H1 (cell line): ENCODE measurements at regions of chr1 and their contacts with region 1.

Region 1: GRCh38 chr1:156689035-156689952 is 12.1 kb upstream of the NES start:
- DNase-seq: peak in 1 of 2 experiments; percentile 92
- H3K4me3 ChIP-seq: peak overlapping the region in 3 of 4 experiments; percentile 36 to 55 (median 52); a peak in 6 of 8 replicates
- H3K27ac ChIP-seq: no peak overlapping the region
- H3K4me1 ChIP-seq: peaks cover 20 to 47% (median 36%) of the 10 kb centered on the region in 4 experiments
- H3K27me3 ChIP-seq: peaks cover 0 to 7% (median 0%) of the 10 kb centered on the region in 4 experiments; a peak in 2 of 7 replicates
- CTCF ChIP-seq: peak; percentile 91 to 98 (median 97)
- EP300 ChIP-seq: no peak; a peak in 1 of 3 replicates
- POLR2A ChIP-seq: no peak
- RAD21 ChIP-seq: peak; percentile 99 to 100

Region 2: GRCh38 chr1:156510709-156511108 is 178.6 kb before region 1 on chr1:
- CTCF ChIA-PET with region 1: no interaction called
- POLR2A ChIA-PET with region 1: no interaction called
- DNase-seq: no peak
- H3K4me3 ChIP-seq: no peak overlapping the region
- H3K27ac ChIP-seq: no peak overlapping the region
- H3K4me1 ChIP-seq: peaks cover 0 to 11% (median 4%) of the 10 kb centered on the region in 4 experiments; a peak in 3 of 7 replicates
- H3K27me3 ChIP-seq: no peaks in the 10 kb centered on the region
- CTCF ChIP-seq: no peak
- EP300 ChIP-seq: no peak
- POLR2A ChIP-seq: no peak
- RAD21 ChIP-seq: no peak

Region 3: GRCh38 chr1:156705918-156706656 is 16.8 kb after region 1 on chr1:
- CTCF ChIA-PET with region 1: interaction called, 4,284 read pairs
- POLR2A ChIA-PET with region 1: interaction called, 530 read pairs
- DNase-seq: peak; percentile 86 to 98
- H3K4me3 ChIP-seq: peak overlapping the region; percentile 50 to 80 (median 70)
- H3K27ac ChIP-seq: peak overlapping the region; percentile 79
- H3K4me1 ChIP-seq: peaks cover 27 to 57% (median 45%) of the 10 kb centered on the region in 4 experiments
- H3K27me3 ChIP-seq: peaks cover 0 to 19% (median 8%) of the 10 kb centered on the region in 4 experiments; a peak in 4 of 7 replicates
- CTCF ChIP-seq: peak; percentile 72 to 86 (median 81)
- EP300 ChIP-seq: peak in 1 of 2 experiments; percentile 51; a peak in 1 of 3 replicates
- POLR2A ChIP-seq: no peak
- RAD21 ChIP-seq: peak; percentile 78 to 88

Region 4: GRCh38 chr1:156751758-156752757 is 62.8 kb after region 1 on chr1:
- CTCF ChIA-PET with region 1: interaction called, 24 read pairs
- POLR2A ChIA-PET with region 1: interaction called, 22 read pairs
- DNase-seq: peak; percentile 91 to 93
- H3K4me3 ChIP-seq: peak overlapping the region; percentile 86 to 100 (median 95)
- H3K27ac ChIP-seq: peak overlapping the region; percentile 85
- H3K4me1 ChIP-seq: peaks cover 24 to 36% (median 27%) of the 10 kb centered on the region in 4 experiments
- H3K27me3 ChIP-seq: no peaks in the 10 kb centered on the region
- CTCF ChIP-seq: no peak; a peak in 1 of 4 replicates
- EP300 ChIP-seq: peak in 1 of 2 experiments; percentile 84; a peak in 1 of 3 replicates
- POLR2A ChIP-seq: peak; percentile 65 to 79; a peak in 2 of 3 replicates
- RAD21 ChIP-seq: no peak

Region 5: GRCh38 chr1:156789621-156790318 is 100.5 kb after region 1 on chr1:
- CTCF ChIA-PET with region 1: interaction called, 12 read pairs
- POLR2A ChIA-PET with region 1: no interaction called
- DNase-seq: no peak
- H3K4me3 ChIP-seq: no peak overlapping the region
- H3K27ac ChIP-seq: no peak overlapping the region
- H3K4me1 ChIP-seq: no peaks in the 10 kb centered on the region
- H3K27me3 ChIP-seq: no peaks in the 10 kb centered on the region
- CTCF ChIP-seq: no peak
- EP300 ChIP-seq: no peak
- POLR2A ChIP-seq: no peak
- RAD21 ChIP-seq: no peak

Region 6: GRCh38 chr1:156833603-156834002 is 144.3 kb after region 1 on chr1:
- CTCF ChIA-PET with region 1: interaction called, 29 read pairs
- POLR2A ChIA-PET with region 1: no interaction called
- DNase-seq: no peak
- H3K4me3 ChIP-seq: no peak overlapping the region
- H3K27ac ChIP-seq: no peak overlapping the region
- H3K4me1 ChIP-seq: no peaks in the 10 kb centered on the region
- H3K27me3 ChIP-seq: peaks cover 0 to 14% (median 7%) of the 10 kb centered on the region in 4 experiments; a peak in 5 of 7 replicates
- CTCF ChIP-seq: no peak
- EP300 ChIP-seq: no peak
- POLR2A ChIP-seq: no peak
- RAD21 ChIP-seq: no peak

Region 7: GRCh38 chr1:156876281-156876680 is 187.0 kb after region 1 on chr1:
- CTCF ChIA-PET with region 1: interaction called, 13 read pairs
- POLR2A ChIA-PET with region 1: no interaction called
- DNase-seq: peak; percentile 46 to 78
- H3K4me3 ChIP-seq: no peak overlapping the region
- H3K27ac ChIP-seq: no peak overlapping the region
- H3K4me1 ChIP-seq: peaks cover 0 to 4% (median 1%) of the 10 kb centered on the region in 4 experiments; a peak in 4 of 7 replicates
- H3K27me3 ChIP-seq: peaks cover 0 to 41% (median 17%) of the 10 kb centered on the region in 4 experiments; a peak in 6 of 7 replicates
- CTCF ChIP-seq: peak; percentile 56 to 76 (median 75)
- EP300 ChIP-seq: no peak
- POLR2A ChIP-seq: no peak
- RAD21 ChIP-seq: peak; percentile 21 to 39; a peak in 2 of 4 replicates